K562 (cell line): ENCODE measurements at regions of chr1 and their contacts with region 1.

Region 1: DNA sequence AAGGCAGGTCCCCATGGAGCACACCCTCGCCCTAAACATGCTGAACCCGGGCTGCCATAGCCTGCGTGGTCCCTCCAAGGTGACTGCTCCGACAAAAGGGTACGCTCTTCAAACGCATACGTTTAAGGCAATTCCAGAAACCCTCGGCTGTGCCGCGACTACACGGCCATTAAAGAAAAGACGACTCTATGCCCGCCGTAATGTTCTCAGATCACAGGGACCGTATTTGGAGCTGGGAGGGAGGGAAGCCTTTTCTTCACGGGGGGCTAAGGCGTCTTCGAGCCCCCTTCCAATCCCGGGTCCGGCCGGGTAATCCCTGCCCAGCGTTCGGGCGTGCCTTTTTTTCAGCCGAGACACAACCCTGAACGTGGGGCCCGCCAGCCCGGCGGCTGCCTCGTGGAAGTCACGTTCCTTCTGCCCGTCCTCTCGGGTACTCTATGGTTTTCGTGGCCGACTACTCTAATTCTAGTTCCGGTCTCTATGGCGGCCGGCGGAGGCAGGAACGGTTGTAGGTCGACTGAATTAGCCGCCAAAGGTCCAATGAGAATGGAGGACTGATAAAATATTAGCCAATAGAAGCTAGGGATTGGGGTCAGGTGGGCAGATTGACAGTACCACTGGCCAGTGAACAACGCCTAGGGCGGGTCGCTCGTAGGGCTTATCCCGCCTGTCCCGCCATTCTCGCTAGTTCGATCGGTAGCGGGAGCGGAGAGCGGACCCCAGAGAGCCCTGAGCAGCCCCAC is at the start of gene YBX1:
- DNase-seq: peak; percentile 98 to 100 (median 99)
- ATAC-seq: peak; percentile 90
- H3K4me3 ChIP-seq: peak within 1 kb of the TSS; percentile 77
- H3K27ac ChIP-seq: peak within 1 kb of the TSS; percentile 95
- H3K4me1 ChIP-seq: peaks cover 3 to 28% of the 10 kb centered on the region in 2 experiments; a peak in 4 of 5 replicates
- H3K27me3 ChIP-seq: no peaks in the 10 kb centered on the region
- CTCF ChIP-seq: no peak
- EP300 ChIP-seq: peak; percentile 36
- POLR2A ChIP-seq: peak; percentile 98
- RAD21 ChIP-seq: peak in 1 of 2 experiments; percentile 18; a peak in 1 of 4 replicates
- polyA plus RNA-seq, gene YBX1: 363 to 380 TPM

Region 2: GRCh38 chr1:42657971-42658879 is 23.7 kb before region 1 on chr1 and contains the start of gene PPIH:
- CTCF ChIA-PET with region 1: no interaction called
- POLR2A ChIA-PET with region 1: interaction called, 72 read pairs
- in situ Hi-C with region 1: no loop called
- intact Hi-C with region 1: loop called (anchors 1 kb)
- DNase-seq: peak; percentile 95 to 98 (median 96)
- ATAC-seq: peak; percentile 99
- H3K4me3 ChIP-seq: peak within 1 kb of the TSS; percentile 58
- H3K27ac ChIP-seq: peak within 1 kb of the TSS; percentile 86
- H3K4me1 ChIP-seq: peaks cover 0 to 16% of the 10 kb centered on the region in 2 experiments
- H3K27me3 ChIP-seq: no peaks in the 10 kb centered on the region
- CTCF ChIP-seq: peak in 2 of 3 experiments; percentile 34 to 54; a peak in 4 of 6 replicates
- EP300 ChIP-seq: peak; percentile 53
- POLR2A ChIP-seq: peak; percentile 96
- RAD21 ChIP-seq: no peak
- polyA plus RNA-seq, gene PPIH: 221 to 265 TPM

Region 3: GRCh38 chr1:42766741-42767509 is 85.0 kb after region 1 on chr1 and contains the starts of genes C1orf50 and P3H1:
- CTCF ChIA-PET with region 1: no interaction called
- POLR2A ChIA-PET with region 1: interaction called, 12 read pairs
- in situ Hi-C with region 1: no loop called
- intact Hi-C with region 1: loop called (anchors 5 kb)
- DNase-seq: peak; percentile 96 to 100 (median 96)
- ATAC-seq: peak; percentile 93
- H3K4me3 ChIP-seq: peak within 1 kb of the TSS; percentile 76
- H3K27ac ChIP-seq: peak within 1 kb of the TSS; percentile 81
- H3K4me1 ChIP-seq: peaks cover 12 to 24% of the 10 kb centered on the region in 2 experiments; a peak in 3 of 5 replicates
- H3K27me3 ChIP-seq: no peaks in the 10 kb centered on the region
- CTCF ChIP-seq: peak in 1 of 3 experiments; percentile 10; a peak in 2 of 6 replicates
- EP300 ChIP-seq: no peak; the same call in 1 of the 2 replicates
- POLR2A ChIP-seq: peak; percentile 98
- RAD21 ChIP-seq: no peak
- polyA plus RNA-seq, gene C1orf50: 0.55 to 1.8 TPM
- polyA plus RNA-seq, gene P3H1: 1.7 to 5.0 TPM

Region 4: GRCh38 chr1:42931108-42931539 is 249.2 kb after region 1 on chr1:
- CTCF ChIA-PET with region 1: no interaction called
- POLR2A ChIA-PET with region 1: no interaction called
- in situ Hi-C with region 1: no loop called
- intact Hi-C with region 1: loop called (anchors 10 kb)
- DNase-seq: peak; percentile 76 to 83 (median 76)
- ATAC-seq: peak; percentile 85
- H3K4me3 ChIP-seq: no peak overlapping the region
- H3K27ac ChIP-seq: peak overlapping the region; percentile 53; the same call in 1 of the 3 replicates
- H3K4me1 ChIP-seq: peaks cover 60 to 79% of the 10 kb centered on the region in 2 experiments
- H3K27me3 ChIP-seq: no peaks in the 10 kb centered on the region
- CTCF ChIP-seq: peak; percentile 71 to 81 (median 80)
- EP300 ChIP-seq: no peak
- POLR2A ChIP-seq: no peak
- RAD21 ChIP-seq: peak; percentile 59 to 89